CD8-positive, alpha-beta T cell (primary cell): ENCODE measurements at regions of chr15 and their contacts with region 1.

Region 1: GRCh38 chr15:43329960-43330779 is at the start of gene LCMT2:
- DNase-seq: peak; percentile 80 to 98 (median 91)
- ATAC-seq: peak; percentile 85
- H3K4me3 ChIP-seq: peak within 1 kb of the TSS; percentile 74 to 84
- H3K4me3 Mint-ChIP-seq: peak within 1 kb of the TSS; percentile 98
- H3K27ac ChIP-seq: peak within 1 kb of the TSS; percentile 89 to 96
- H3K27ac Mint-ChIP-seq: peak within 1 kb of the TSS; percentile 100
- H3K4me1 ChIP-seq: peaks cover 23% of the 10 kb centered on the region
- H3K4me1 Mint-ChIP-seq: peaks cover 42% of the 10 kb centered on the region
- H3K27me3 ChIP-seq: no peaks in the 10 kb centered on the region
- H3K27me3 Mint-ChIP-seq: no peaks in the 10 kb centered on the region
- CTCF ChIP-seq: no peak
- total RNA-seq, gene LCMT2: 7.0 to 7.6 TPM

Region 2: GRCh38 chr15:43133430-43134156 is 196.6 kb before region 1 on chr15 and contains the start of gene TMEM62:
- CTCF ChIA-PET with region 1: no interaction called
- POLR2A ChIA-PET with region 1: no interaction called
- intact Hi-C with region 1: loop called in 1 of 2 experiments (anchors 10 kb)
- DNase-seq: peak; percentile 20 to 78 (median 60)
- ATAC-seq: peak; percentile 76
- H3K4me3 ChIP-seq: peak within 1 kb of the TSS; percentile 80 to 83
- H3K4me3 Mint-ChIP-seq: peak within 1 kb of the TSS; percentile 94
- H3K27ac ChIP-seq: peak within 1 kb of the TSS; percentile 66 to 87
- H3K27ac Mint-ChIP-seq: peak within 1 kb of the TSS; percentile 86
- H3K4me1 ChIP-seq: peaks cover 9% of the 10 kb centered on the region
- H3K4me1 Mint-ChIP-seq: peaks cover 21% of the 10 kb centered on the region
- H3K27me3 ChIP-seq: no peaks in the 10 kb centered on the region
- H3K27me3 Mint-ChIP-seq: no peaks in the 10 kb centered on the region
- CTCF ChIP-seq: no peak
- total RNA-seq, gene TMEM62: 23.0 to 25.5 TPM

Region 3: DNA sequence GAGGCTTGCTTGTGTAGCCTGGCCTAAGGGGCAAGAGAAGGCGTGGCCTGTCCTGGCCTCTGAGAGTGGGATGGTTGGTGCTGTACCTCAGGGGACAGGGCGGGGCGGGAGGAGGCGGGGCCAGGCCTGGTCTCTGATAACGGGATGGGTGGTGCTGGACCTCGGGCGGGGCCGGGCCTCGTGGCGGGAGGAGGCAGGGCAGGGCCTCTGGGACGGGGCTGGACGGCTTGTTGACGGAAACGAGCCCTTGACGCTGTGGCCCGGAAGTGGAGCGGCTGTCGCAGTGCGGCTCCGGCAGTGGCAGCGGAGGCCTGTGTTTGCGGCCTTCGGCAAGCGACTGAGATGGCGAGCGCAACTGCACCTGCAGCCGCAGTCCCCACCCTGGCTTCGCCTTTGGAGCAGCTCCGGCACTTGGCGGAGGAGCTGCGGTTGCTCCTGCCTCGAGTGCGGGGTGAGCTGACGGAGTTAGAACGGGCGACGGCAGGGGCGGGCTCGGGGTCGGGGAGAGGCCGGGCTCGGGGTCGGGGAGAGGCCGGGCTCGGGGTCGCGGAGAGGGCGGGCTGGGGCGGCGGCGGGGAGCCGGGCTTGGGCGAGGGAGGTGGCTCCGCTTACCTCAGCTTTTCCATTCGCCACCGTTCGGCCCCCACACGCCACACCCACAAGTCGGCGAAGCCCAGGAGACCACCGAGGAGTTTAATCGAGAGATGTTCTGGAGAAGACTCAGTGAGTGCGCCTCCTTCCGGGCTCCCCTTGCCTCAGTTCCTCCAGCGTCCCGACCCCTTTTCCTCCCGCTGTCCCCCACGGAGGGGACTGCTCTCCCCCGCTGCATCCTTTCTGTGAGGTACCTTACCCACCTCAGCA is 144.8 kb before region 1 on chr15 and contains the start of gene CCNDBP1:
- CTCF ChIA-PET with region 1: no interaction called
- POLR2A ChIA-PET with region 1: no interaction called
- intact Hi-C with region 1: loop called (anchors 1 kb)
- DNase-seq: peak; percentile 73 to 93 (median 86)
- ATAC-seq: peak; percentile 75
- H3K4me3 ChIP-seq: peak within 1 kb of the TSS; percentile 82 to 97
- H3K4me3 Mint-ChIP-seq: peak within 1 kb of the TSS; percentile 97
- H3K27ac ChIP-seq: peak within 1 kb of the TSS; percentile 87 to 91
- H3K27ac Mint-ChIP-seq: peak within 1 kb of the TSS; percentile 98
- H3K4me1 ChIP-seq: peaks cover 18% of the 10 kb centered on the region
- H3K4me1 Mint-ChIP-seq: peaks cover 43% of the 10 kb centered on the region
- H3K27me3 ChIP-seq: no peaks in the 10 kb centered on the region
- H3K27me3 Mint-ChIP-seq: no peaks in the 10 kb centered on the region
- CTCF ChIP-seq: peak; percentile 56
- total RNA-seq, gene CCNDBP1: 80.3 to 81.1 TPM

Region 4: GRCh38 chr15:43370975-43371974 is 41.1 kb after region 1 on chr15 and contains the starts of genes TUBGCP4 and ZSCAN29:
- CTCF ChIA-PET with region 1: interaction called, 3 read pairs
- POLR2A ChIA-PET with region 1: interaction called, 3 read pairs
- intact Hi-C with region 1: loop called in 1 of 2 experiments (anchors 1 kb)
- DNase-seq: peak; percentile 34 to 86 (median 71)
- ATAC-seq: peak; percentile 70
- H3K4me3 ChIP-seq: peak within 1 kb of the TSS; percentile 88 to 93
- H3K4me3 Mint-ChIP-seq: peak within 1 kb of the TSS; percentile 91
- H3K27ac ChIP-seq: peak within 1 kb of the TSS; percentile 48 to 74
- H3K27ac Mint-ChIP-seq: peak within 1 kb of the TSS; percentile 86
- H3K4me1 ChIP-seq: peaks cover 23% of the 10 kb centered on the region
- H3K4me1 Mint-ChIP-seq: peaks cover 54% of the 10 kb centered on the region
- H3K27me3 ChIP-seq: no peaks in the 10 kb centered on the region
- H3K27me3 Mint-ChIP-seq: no peaks in the 10 kb centered on the region
- CTCF ChIP-seq: no peak
- total RNA-seq, gene TUBGCP4: 3.9 to 5.8 TPM
- total RNA-seq, gene ZSCAN29: 9.7 to 9.8 TPM

Region 5: DNA sequence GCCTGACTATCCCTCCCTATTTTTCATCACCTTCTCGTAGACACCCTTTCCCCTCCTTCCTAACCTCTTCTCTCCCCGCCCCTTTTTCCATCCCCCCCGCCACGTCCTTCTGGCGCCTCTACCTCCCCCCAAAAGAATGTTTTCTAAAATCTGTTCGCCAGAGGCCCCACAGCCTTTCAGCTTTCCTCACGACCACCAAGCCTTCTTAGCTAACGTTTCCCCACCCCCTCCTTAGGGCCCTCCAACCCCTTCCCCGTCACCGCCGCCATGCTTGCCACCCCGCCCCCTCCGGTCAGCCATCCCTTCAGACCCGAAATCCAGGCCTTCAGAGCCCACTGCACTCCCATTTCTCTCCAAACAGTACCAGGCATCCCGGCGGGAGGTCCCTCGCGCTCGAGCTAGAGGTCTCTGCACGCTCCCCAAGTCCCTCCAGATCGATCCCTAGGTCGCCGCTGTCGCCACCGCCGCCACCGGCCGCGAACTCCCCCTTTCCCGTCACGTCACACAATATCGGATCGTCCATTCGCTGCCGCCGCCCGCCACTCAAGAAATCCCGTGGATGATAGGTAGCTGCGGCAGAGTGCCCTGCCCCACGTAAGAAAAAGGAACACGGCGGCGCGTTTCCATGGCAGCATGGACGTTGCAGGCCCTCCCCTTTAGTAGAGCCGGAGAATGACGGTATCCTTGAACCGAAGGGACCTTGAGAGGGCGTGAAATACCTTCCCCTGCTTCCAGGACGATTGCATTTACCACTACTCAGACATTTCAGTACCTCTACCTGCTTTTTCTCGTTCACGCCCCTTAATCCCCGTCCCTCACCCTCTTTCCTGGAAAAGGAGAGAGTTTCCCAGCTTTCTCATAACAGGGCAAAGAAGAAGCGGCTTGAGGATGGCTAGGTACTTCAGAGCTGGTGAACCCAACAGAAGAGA is 162.8 kb after region 1 on chr15 and contains the start of gene TP53BP1:
- CTCF ChIA-PET with region 1: no interaction called
- POLR2A ChIA-PET with region 1: no interaction called
- intact Hi-C with region 1: loop called (anchors 1 to 5 kb)
- DNase-seq: peak; percentile 87 to 97 (median 94)
- ATAC-seq: peak; percentile 98
- H3K4me3 ChIP-seq: peak within 1 kb of the TSS; percentile 87 to 92
- H3K4me3 Mint-ChIP-seq: peak within 1 kb of the TSS; percentile 99
- H3K27ac ChIP-seq: peak within 1 kb of the TSS; percentile 95 to 96
- H3K27ac Mint-ChIP-seq: peak within 1 kb of the TSS; percentile 98
- H3K4me1 ChIP-seq: peaks cover 24% of the 10 kb centered on the region
- H3K4me1 Mint-ChIP-seq: peaks cover 32% of the 10 kb centered on the region
- H3K27me3 ChIP-seq: no peaks in the 10 kb centered on the region
- H3K27me3 Mint-ChIP-seq: no peaks in the 10 kb centered on the region
- CTCF ChIP-seq: no peak
- total RNA-seq, gene TP53BP1: 54.6 to 59.7 TPM